B cell (primary cell): ENCODE measurements at regions of chr2 and their contacts with region 1.

Region 1: DNA sequence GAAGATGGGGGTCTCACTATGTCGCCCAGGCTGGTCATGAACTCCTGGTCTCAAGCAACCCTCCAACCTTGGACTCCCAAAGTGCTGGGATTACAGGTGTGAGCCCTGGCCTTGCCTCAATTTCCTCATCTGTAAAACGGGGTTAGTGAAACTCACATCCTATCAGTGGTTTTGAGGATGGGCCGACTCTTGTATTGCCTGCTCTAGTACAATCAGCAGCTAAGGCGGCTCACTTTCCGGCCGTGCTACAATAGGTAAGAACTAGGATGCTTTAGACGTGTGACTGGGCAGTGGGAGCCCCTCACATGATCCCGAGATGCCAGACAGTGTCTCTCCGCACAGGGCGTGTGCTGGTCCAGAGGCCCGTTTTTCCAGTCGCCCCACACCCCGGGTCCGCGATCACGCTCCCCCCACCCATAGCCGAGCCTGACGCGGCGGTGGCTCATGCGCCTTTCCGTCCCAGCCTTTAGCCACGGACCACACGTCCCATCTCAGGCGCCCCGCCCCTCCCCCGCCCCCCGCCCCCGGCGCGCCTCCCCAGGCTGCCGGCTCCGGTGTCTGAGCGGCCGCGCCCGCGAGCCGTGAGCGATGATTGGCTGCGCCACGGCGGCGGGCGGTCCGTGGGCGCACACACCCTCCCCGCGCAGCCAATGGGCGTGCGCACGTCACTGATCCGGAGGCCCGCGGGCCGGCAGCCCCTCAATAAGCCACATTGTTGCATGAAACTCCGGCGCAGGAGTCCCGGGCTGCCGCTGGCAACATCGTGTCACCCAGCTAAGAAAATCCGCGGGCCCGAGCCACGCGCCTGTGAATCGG is at the start of gene HK2:
- DNase-seq: peak; percentile 89
- ATAC-seq: peak; percentile 88
- H3K4me3 ChIP-seq: peak within 1 kb of the TSS; percentile 74 to 94 (median 80)
- H3K4me3 Mint-ChIP-seq: peak within 1 kb of the TSS; percentile 93
- H3K27ac ChIP-seq: peak within 1 kb of the TSS; percentile 69 to 75
- H3K27ac Mint-ChIP-seq: peak within 1 kb of the TSS; percentile 95
- H3K4me1 ChIP-seq: peaks cover 10 to 26% of the 10 kb centered on the region in 2 donors
- H3K4me1 Mint-ChIP-seq: peaks cover 30% of the 10 kb centered on the region
- H3K27me3 ChIP-seq: no peaks in the 10 kb centered on the region
- H3K27me3 Mint-ChIP-seq: no peaks in the 10 kb centered on the region
- CTCF ChIP-seq: no peak
- total RNA-seq, gene HK2: 5.0 and 5.7 TPM in 2 replicates

Region 2: GRCh38 chr2:73736855-73737779 is 1096.5 kb before region 1 on chr2 and contains the start of gene TPRKB:
- CTCF ChIA-PET with region 1: no interaction called
- POLR2A ChIA-PET with region 1: no interaction called
- intact Hi-C with region 1: loop called (anchors 10 kb)
- DNase-seq: peak; percentile 95
- ATAC-seq: peak; percentile 99
- H3K4me3 ChIP-seq: peak within 1 kb of the TSS; percentile 68 to 97 (median 88)
- H3K4me3 Mint-ChIP-seq: peak within 1 kb of the TSS; percentile 91
- H3K27ac ChIP-seq: peak within 1 kb of the TSS; percentile 59 to 78
- H3K27ac Mint-ChIP-seq: peak within 1 kb of the TSS; percentile 83
- H3K4me1 ChIP-seq: peaks cover 8 to 15% of the 10 kb centered on the region in 2 donors
- H3K4me1 Mint-ChIP-seq: peaks cover 16% of the 10 kb centered on the region
- H3K27me3 ChIP-seq: no peaks in the 10 kb centered on the region
- H3K27me3 Mint-ChIP-seq: no peaks in the 10 kb centered on the region
- CTCF ChIP-seq: no peak
- total RNA-seq, gene TPRKB: 24.3 and 31.2 TPM in 2 replicates

Region 3: GRCh38 chr2:74715078-74715791 is 118.4 kb before region 1 on chr2:
- CTCF ChIA-PET with region 1: interaction called, 14 read pairs
- POLR2A ChIA-PET with region 1: interaction called, 3 read pairs
- intact Hi-C with region 1: loop called (anchors 5 kb)
- DNase-seq: peak; percentile 88
- ATAC-seq: peak; percentile 87
- H3K4me3 ChIP-seq: peak overlapping the region; percentile 30 to 69 (median 55)
- H3K4me3 Mint-ChIP-seq: peak overlapping the region; percentile 86
- H3K27ac ChIP-seq: no peak overlapping the region
- H3K27ac Mint-ChIP-seq: peak overlapping the region; percentile 3
- H3K4me1 ChIP-seq: peaks cover 4 to 6% of the 10 kb centered on the region in 2 donors
- H3K4me1 Mint-ChIP-seq: peaks cover 7% of the 10 kb centered on the region
- H3K27me3 ChIP-seq: peaks cover 0 to 20% (median 18%) of the 10 kb centered on the region in 4 experiments
- H3K27me3 Mint-ChIP-seq: peaks cover 14% of the 10 kb centered on the region
- CTCF ChIP-seq: peak; percentile 97

Region 4: DNA sequence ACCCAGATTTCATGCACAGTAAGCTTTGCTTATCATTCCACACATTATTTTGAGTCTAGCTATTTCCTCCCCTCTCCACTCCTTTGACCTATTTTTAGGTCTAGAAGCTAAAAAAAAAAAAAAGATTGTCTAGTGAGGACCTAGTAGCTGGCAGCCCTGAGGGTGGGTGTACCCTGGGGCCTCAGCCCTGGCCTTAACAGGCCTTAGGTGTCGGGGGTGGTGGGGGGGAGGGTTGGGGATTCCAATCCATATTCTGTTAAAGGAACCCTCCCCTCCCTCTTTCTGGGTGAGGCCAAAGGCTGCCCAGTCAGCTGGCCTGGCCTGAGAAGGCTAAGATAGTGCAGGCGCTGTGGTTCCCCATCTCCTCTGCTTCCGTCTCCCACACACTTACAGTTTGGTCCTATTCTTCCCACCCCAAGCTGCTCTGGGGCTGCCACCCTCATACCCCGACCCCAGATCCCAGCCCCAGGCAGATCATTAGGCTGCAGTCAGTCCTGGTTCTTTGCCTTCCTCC is 65.2 kb before region 1 on chr2:
- CTCF ChIA-PET with region 1: no interaction called
- POLR2A ChIA-PET with region 1: no interaction called
- intact Hi-C with region 1: no loop called
- DNase-seq: no peak
- ATAC-seq: no peak
- H3K4me3 ChIP-seq: no peak overlapping the region
- H3K4me3 Mint-ChIP-seq: no peak overlapping the region
- H3K27ac ChIP-seq: no peak overlapping the region
- H3K27ac Mint-ChIP-seq: no peak overlapping the region
- H3K4me1 ChIP-seq: no peaks in the 10 kb centered on the region
- H3K4me1 Mint-ChIP-seq: peaks cover 2% of the 10 kb centered on the region
- H3K27me3 ChIP-seq: peaks cover 0 to 3% (median 0%) of the 10 kb centered on the region in 4 experiments
- H3K27me3 Mint-ChIP-seq: peaks cover 3% of the 10 kb centered on the region
- CTCF ChIP-seq: no peak

Region 5: GRCh38 chr2:74806920-74807319 is 26.7 kb before region 1 on chr2:
- CTCF ChIA-PET with region 1: no interaction called
- POLR2A ChIA-PET with region 1: no interaction called
- intact Hi-C with region 1: no loop called
- DNase-seq: no peak
- ATAC-seq: no peak
- H3K4me3 ChIP-seq: no peak overlapping the region
- H3K4me3 Mint-ChIP-seq: no peak overlapping the region
- H3K27ac ChIP-seq: no peak overlapping the region
- H3K27ac Mint-ChIP-seq: no peak overlapping the region
- H3K4me1 ChIP-seq: peaks cover 0 to 9% of the 10 kb centered on the region in 2 donors
- H3K4me1 Mint-ChIP-seq: peaks cover 11% of the 10 kb centered on the region
- H3K27me3 ChIP-seq: no peaks in the 10 kb centered on the region
- H3K27me3 Mint-ChIP-seq: peaks cover 34% of the 10 kb centered on the region
- CTCF ChIP-seq: no peak

Region 6: GRCh38 chr2:74849228-74849892 is 15.7 kb after region 1 on chr2:
- CTCF ChIA-PET with region 1: interaction called, 31 read pairs
- POLR2A ChIA-PET with region 1: interaction called, 6 read pairs
- intact Hi-C with region 1: loop called (anchors 1 kb)
- DNase-seq: peak; percentile 79
- ATAC-seq: peak; percentile 80
- H3K4me3 ChIP-seq: peak overlapping the region; percentile 33 to 65 (median 48)
- H3K4me3 Mint-ChIP-seq: peak overlapping the region; percentile 92
- H3K27ac ChIP-seq: peak overlapping the region; percentile 88 to 94
- H3K27ac Mint-ChIP-seq: peak overlapping the region; percentile 99
- H3K4me1 ChIP-seq: peaks cover 58 to 68% of the 10 kb centered on the region in 2 donors
- H3K4me1 Mint-ChIP-seq: peaks cover 69% of the 10 kb centered on the region
- H3K27me3 ChIP-seq: no peaks in the 10 kb centered on the region
- H3K27me3 Mint-ChIP-seq: no peaks in the 10 kb centered on the region
- CTCF ChIP-seq: no peak

Region 7: GRCh38 chr2:74958274-74959105 is 124.9 kb after region 1 on chr2 and contains the start of gene POLE4:
- CTCF ChIA-PET with region 1: no interaction called
- POLR2A ChIA-PET with region 1: no interaction called
- intact Hi-C with region 1: loop called (anchors 2 kb)
- DNase-seq: peak; percentile 96
- ATAC-seq: peak; percentile 91
- H3K4me3 ChIP-seq: peak within 1 kb of the TSS; percentile 44 to 80 (median 65)
- H3K4me3 Mint-ChIP-seq: peak within 1 kb of the TSS; percentile 88
- H3K27ac ChIP-seq: peak within 1 kb of the TSS; percentile 83 to 92
- H3K27ac Mint-ChIP-seq: peak within 1 kb of the TSS; percentile 91
- H3K4me1 ChIP-seq: peaks cover 6 to 17% of the 10 kb centered on the region in 2 donors
- H3K4me1 Mint-ChIP-seq: peaks cover 72% of the 10 kb centered on the region
- H3K27me3 ChIP-seq: no peaks in the 10 kb centered on the region
- H3K27me3 Mint-ChIP-seq: no peaks in the 10 kb centered on the region
- CTCF ChIP-seq: no peak
- total RNA-seq, gene POLE4: 53.3 and 56.0 TPM in 2 replicates

Region 8: GRCh38 chr2:75007819-75008218 is 174.2 kb after region 1 on chr2:
- CTCF ChIA-PET with region 1: no interaction called
- POLR2A ChIA-PET with region 1: no interaction called
- intact Hi-C with region 1: no loop called
- DNase-seq: no peak
- ATAC-seq: no peak
- H3K4me3 ChIP-seq: no peak overlapping the region
- H3K4me3 Mint-ChIP-seq: no peak overlapping the region
- H3K27ac ChIP-seq: no peak overlapping the region
- H3K27ac Mint-ChIP-seq: no peak overlapping the region
- H3K4me1 ChIP-seq: no peaks in the 10 kb centered on the region
- H3K4me1 Mint-ChIP-seq: no peaks in the 10 kb centered on the region
- H3K27me3 ChIP-seq: no peaks in the 10 kb centered on the region
- H3K27me3 Mint-ChIP-seq: no peaks in the 10 kb centered on the region
- CTCF ChIP-seq: no peak

Region 9: GRCh38 chr2:75807992-75808391 is 974.4 kb after region 1 on chr2:
- CTCF ChIA-PET with region 1: no interaction called
- POLR2A ChIA-PET with region 1: no interaction called
- intact Hi-C with region 1: no loop called
- DNase-seq: no peak
- ATAC-seq: no peak
- H3K4me3 ChIP-seq: no peak overlapping the region
- H3K4me3 Mint-ChIP-seq: no peak overlapping the region
- H3K27ac ChIP-seq: no peak overlapping the region
- H3K27ac Mint-ChIP-seq: no peak overlapping the region
- H3K4me1 ChIP-seq: no peaks in the 10 kb centered on the region
- H3K4me1 Mint-ChIP-seq: no peaks in the 10 kb centered on the region
- H3K27me3 ChIP-seq: no peaks in the 10 kb centered on the region
- H3K27me3 Mint-ChIP-seq: no peaks in the 10 kb centered on the region
- CTCF ChIP-seq: no peak